ENCODE measurements at regions of chr10 and their contacts with region 1.

Region 1: DNA sequence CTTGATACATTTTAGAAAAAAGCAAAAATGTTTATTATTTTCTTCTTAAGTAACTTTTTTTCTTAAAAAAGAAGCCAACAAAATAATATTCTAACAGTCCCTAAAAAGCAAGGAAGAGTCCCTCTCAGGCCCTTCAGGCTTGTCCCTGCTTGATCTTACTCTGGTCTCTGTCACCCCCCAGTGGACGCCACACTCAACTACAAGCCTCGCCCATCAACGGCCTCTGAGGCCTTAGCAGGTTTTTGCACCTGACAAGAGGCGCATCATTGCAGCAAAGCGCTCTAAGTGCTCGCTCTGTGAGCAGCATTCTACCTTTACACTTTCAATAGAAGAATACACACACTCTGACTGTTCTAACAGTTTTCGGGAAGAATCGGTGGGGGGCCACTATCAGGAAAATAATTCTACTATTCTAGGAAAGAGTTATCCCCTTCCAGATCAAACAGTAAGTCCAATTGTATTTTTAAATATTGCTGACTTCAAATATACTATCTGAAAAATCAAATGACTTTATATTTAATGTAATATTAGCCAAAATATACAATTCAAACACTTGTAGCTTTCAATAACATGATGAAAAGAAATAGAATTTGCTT is 139.2 kb downstream of the USP6NL start:
- DNase-seq: peak; percentile 91
- H3K4me3 Mint-ChIP-seq: no peak overlapping the region
- H3K27ac Mint-ChIP-seq: no peak overlapping the region
- H3K4me1 Mint-ChIP-seq: no peaks in the 10 kb centered on the region
- H3K27me3 Mint-ChIP-seq: no peaks in the 10 kb centered on the region

Region 2: GRCh38 chr10:11113156-11113555 is 359.1 kb before region 1 on chr10:
- intact Hi-C with region 1: loop called (anchors 5 kb)
- DNase-seq: peak; percentile 68
- H3K4me3 Mint-ChIP-seq: no peak overlapping the region
- H3K27ac Mint-ChIP-seq: no peak overlapping the region
- H3K4me1 Mint-ChIP-seq: peaks cover 8% of the 10 kb centered on the region
- H3K27me3 Mint-ChIP-seq: peaks cover 7% of the 10 kb centered on the region

Region 3: DNA sequence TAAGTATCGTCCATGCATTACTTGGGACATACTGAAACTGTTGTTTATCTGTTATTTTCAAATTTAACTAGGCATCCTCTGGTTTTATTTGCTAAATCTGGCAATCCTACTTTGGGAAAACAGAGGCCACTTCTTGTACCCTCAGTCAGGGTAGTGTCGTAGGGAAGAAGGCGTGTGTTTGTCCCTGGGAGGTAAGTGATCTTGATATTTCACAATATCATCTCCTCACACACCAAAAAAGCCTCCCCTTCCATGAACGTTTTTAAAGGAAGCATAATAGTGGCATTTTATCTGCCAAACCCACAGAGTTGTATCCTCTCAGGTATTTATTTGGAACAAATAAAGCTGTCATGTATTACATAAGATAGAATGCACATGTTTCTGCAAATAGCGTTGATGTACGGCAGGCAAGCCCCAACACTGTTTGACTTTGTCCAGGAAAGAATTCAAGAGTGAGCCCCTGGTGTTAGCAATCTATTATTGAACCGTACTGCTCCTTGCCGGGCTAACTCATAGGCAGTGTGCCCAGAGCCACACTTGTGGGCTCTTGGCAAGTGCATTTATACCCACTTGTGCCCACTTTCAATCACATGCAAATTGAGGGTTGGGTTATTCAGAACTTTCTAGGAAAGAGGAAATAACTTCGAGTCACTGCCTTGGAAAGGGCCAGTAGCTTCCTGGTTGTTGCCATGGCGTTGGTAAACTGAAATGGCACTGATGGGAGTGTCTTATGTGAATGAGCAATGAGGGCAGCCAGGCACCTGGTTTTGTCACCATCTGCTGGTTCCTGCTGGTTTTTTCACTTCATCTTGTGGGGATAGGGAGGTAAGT is 126.8 kb before region 1 on chr10:
- intact Hi-C with region 1: loop called (anchors 10 kb)
- DNase-seq: no peak
- H3K4me3 Mint-ChIP-seq: no peak overlapping the region
- H3K27ac Mint-ChIP-seq: no peak overlapping the region
- H3K4me1 Mint-ChIP-seq: no peaks in the 10 kb centered on the region
- H3K27me3 Mint-ChIP-seq: peaks cover 6% of the 10 kb centered on the region

Region 4: DNA sequence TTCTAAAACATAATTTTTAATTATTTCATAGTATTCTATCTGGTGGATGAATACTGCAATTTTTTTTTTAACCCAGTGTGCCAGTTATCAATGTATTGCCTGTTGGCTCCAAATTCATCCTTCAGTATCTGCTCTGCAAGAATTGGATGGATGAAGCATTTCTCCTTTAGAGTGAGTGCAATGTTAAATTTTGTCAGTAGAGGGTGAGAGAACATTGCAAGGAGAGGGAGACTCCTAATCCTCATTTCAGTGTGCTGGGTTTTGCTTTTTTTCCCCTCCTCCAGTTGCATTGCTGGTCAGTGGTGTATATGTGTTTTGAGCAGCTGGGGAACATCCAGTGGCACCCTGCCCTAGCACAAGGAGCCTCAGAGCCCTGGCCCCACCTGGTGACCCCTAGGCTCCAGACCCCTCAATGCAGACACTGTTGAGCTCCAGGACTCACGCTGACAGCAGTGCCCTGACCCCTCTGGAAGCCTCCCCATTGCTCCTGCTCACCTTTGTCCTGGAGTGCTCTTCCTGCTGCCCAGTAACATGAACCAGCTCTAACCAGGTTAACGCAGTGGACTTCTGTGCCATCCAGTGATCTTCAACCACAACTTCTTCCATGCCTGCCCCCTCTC is 60.2 kb before region 1 on chr10:
- intact Hi-C with region 1: loop called (anchors 5 kb)
- DNase-seq: no peak
- H3K4me3 Mint-ChIP-seq: no peak overlapping the region
- H3K27ac Mint-ChIP-seq: no peak overlapping the region
- H3K4me1 Mint-ChIP-seq: peaks cover 9% of the 10 kb centered on the region
- H3K27me3 Mint-ChIP-seq: peaks cover 4% of the 10 kb centered on the region

Region 5: GRCh38 chr10:11424456-11425297 is 47.6 kb before region 1 on chr10:
- intact Hi-C with region 1: no loop called
- DNase-seq: no peak
- H3K4me3 Mint-ChIP-seq: no peak overlapping the region
- H3K27ac Mint-ChIP-seq: no peak overlapping the region
- H3K4me1 Mint-ChIP-seq: peaks cover 3% of the 10 kb centered on the region
- H3K27me3 Mint-ChIP-seq: peaks cover 3% of the 10 kb centered on the region

Region 6: DNA sequence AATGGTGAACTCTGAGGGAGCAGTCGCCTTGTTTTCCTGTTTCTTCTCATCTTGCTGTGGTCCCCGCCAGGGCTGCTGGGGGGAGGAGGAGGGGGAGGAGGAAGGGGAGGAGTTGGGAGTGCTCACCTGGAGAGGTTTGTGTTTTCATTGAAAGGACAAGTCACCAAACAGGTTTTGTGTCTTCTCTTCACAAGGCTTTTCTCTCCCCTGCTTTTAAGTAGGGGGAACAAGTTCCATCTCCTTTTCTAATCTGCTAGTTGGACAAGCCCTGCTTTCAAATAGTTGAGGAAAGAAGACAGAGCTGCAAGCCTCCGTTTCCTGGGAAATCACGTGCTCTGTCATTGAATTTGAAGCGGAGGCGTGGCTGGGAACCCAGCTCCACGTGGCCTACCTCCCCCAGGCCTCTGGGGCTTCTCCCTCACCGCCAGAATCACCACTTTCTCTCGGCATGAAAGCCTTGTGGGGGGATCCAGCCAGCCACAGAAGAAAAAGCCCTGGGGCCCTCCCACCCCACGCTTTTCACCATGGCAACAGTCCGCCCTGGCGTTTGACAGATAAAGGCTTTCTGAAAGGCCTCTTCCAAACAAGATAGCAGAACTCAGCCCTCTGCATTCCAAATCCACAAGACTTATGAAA is 402.4 kb after region 1 on chr10:
- intact Hi-C with region 1: no loop called
- DNase-seq: peak; percentile 73
- H3K4me3 Mint-ChIP-seq: peak overlapping the region; percentile 26
- H3K27ac Mint-ChIP-seq: no peak overlapping the region
- H3K4me1 Mint-ChIP-seq: peaks cover 14% of the 10 kb centered on the region
- H3K27me3 Mint-ChIP-seq: peaks cover 39% of the 10 kb centered on the region